ENCODE measurements at regions of chr4 and their contacts with region 1.

Region 1: DNA sequence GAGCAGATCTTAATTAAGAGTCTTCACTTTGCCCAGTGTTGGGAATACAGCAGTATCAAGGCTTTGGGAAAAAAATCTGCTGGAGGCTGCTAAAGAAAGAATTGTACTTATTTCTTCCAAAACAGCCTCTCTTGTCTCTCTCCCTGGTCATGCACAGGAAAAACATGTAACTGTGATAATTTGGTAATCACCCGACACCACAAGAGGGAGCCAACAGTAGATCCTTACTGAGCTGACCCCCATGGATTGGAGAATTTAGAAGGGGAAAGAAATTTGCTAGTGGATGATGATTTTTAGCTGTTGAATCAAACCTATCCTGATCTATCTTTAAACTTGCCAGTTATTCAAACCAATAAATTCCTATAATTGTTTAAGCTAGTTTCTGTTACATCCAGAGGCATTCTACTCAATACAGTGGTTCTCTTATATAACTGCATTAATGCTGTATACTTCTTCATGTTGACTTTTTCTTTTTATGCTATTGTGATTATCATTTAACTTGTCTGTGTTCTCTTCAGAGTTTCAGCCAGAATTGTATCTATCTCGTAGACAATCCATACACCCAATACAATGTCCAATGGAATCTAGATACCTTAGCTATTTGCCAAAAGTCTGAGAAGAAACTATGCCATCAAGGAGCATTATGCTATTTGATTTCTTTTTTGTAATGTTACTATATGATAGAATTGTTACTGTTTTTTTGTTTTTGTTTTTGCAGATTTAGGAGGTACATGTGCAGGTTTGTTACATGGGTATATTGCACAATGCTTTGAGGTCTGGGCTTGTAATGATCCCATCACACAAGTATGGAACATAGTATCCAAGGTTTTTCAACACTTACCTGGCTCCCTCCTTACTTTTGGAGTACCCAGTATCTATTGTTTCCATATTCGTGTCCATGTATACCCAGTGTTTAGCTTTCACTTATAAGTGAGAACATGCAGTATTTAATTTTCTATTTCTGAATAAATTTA is 31.3 kb upstream of the ARHGEF38 start:
- DNase-seq: peak; percentile 17 to 58 (median 36)
- ATAC-seq: peak; percentile 96
- H3K4me3 ChIP-seq: no peak overlapping the region
- H3K27ac ChIP-seq: no peak overlapping the region
- H3K4me1 ChIP-seq: no peaks in the 10 kb centered on the region
- H3K27me3 ChIP-seq: peaks cover 0 to 1% of the 10 kb centered on the region in 2 experiments; a peak in 2 of 5 replicates
- CTCF ChIP-seq: peak; percentile 57 to 64 (median 63)
- EP300 ChIP-seq: no peak
- POLR2A ChIP-seq: no peak
- RAD21 ChIP-seq: peak; percentile 31 to 58

Region 2: DNA sequence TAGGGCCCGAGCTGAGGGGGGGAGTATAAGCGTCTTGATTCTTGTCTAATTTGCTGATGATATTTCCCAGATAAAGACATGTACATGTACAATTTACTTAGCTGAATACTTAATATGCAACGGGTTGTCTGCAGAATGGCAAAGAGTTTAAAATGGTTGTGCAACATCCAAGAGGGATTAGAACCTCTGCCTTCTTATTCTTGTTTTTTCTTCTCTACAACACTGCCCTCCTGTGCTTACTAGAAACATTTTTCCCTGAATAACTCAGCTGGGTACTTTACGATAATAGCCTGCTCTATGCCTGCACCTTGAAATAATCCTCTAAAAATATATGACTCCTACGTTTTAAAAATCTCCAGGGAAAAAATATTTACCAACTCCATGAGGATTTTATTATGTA is 145.6 kb after region 1 on chr4:
- CTCF ChIA-PET with region 1: no interaction called
- POLR2A ChIA-PET with region 1: no interaction called
- in situ Hi-C with region 1: no loop called
- intact Hi-C with region 1: loop called (anchors 2 kb)
- DNase-seq: peak in 2 of 4 experiments; percentile 7 to 9
- ATAC-seq: peak; percentile 87
- H3K4me3 ChIP-seq: no peak overlapping the region
- H3K27ac ChIP-seq: no peak overlapping the region
- H3K4me1 ChIP-seq: no peaks in the 10 kb centered on the region
- H3K27me3 ChIP-seq: no peaks in the 10 kb centered on the region; a peak in 1 of 5 replicates
- CTCF ChIP-seq: peak; percentile 4 to 40 (median 30); a peak in 3 of 6 replicates
- EP300 ChIP-seq: no peak
- POLR2A ChIP-seq: no peak
- RAD21 ChIP-seq: peak; percentile 42 to 54

Region 3: GRCh38 chr4:105715692-105716278 is 194.7 kb after region 1 on chr4:
- CTCF ChIA-PET with region 1: interaction called, 3 read pairs
- POLR2A ChIA-PET with region 1: no interaction called
- in situ Hi-C with region 1: no loop called
- intact Hi-C with region 1: loop called (anchors 2 kb)
- DNase-seq: peak in 2 of 4 experiments; percentile 28 to 36
- ATAC-seq: peak; percentile 61; the same call in 2 of the 3 replicates
- H3K4me3 ChIP-seq: no peak overlapping the region
- H3K27ac ChIP-seq: peak overlapping the region; percentile 13; the same call in 1 of the 3 replicates
- H3K4me1 ChIP-seq: no peaks in the 10 kb centered on the region; a peak in 1 of 5 replicates
- H3K27me3 ChIP-seq: no peaks in the 10 kb centered on the region
- CTCF ChIP-seq: peak in 2 of 3 experiments; percentile 20 to 63; a peak in 3 of 6 replicates
- EP300 ChIP-seq: no peak
- POLR2A ChIP-seq: no peak
- RAD21 ChIP-seq: peak; percentile 32 to 38; a peak in 2 of 4 replicates

Region 4: GRCh38 chr4:106201373-106201772 is 680.3 kb after region 1 on chr4:
- CTCF ChIA-PET with region 1: no interaction called
- POLR2A ChIA-PET with region 1: no interaction called
- in situ Hi-C with region 1: no loop called
- intact Hi-C with region 1: loop called (anchors 2 kb)
- DNase-seq: peak in 1 of 4 experiments; percentile 9
- ATAC-seq: peak; percentile 80
- H3K4me3 ChIP-seq: no peak overlapping the region
- H3K27ac ChIP-seq: no peak overlapping the region
- H3K4me1 ChIP-seq: no peaks in the 10 kb centered on the region
- H3K27me3 ChIP-seq: no peaks in the 10 kb centered on the region
- CTCF ChIP-seq: peak in 1 of 3 experiments; percentile 49; a peak in 3 of 6 replicates
- EP300 ChIP-seq: no peak
- POLR2A ChIP-seq: no peak
- RAD21 ChIP-seq: peak in 1 of 2 experiments; percentile 54; a peak in 2 of 4 replicates

Measured in K562 (cell line).